ENCODE measurements at regions of chr21 and their contacts with region 1.

Region 1: GRCh38 chr21:44006017-44006619 is 6.0 kb upstream of the TRAPPC10 start:
- DNase-seq: no peak
- H3K4me3 ChIP-seq: no peak overlapping the region
- H3K27ac ChIP-seq: peak overlapping the region; percentile 40 to 79
- H3K4me1 ChIP-seq: no peaks in the 10 kb centered on the region
- H3K27me3 ChIP-seq: no peaks in the 10 kb centered on the region
- CTCF ChIP-seq: no peak
- POLR2A ChIP-seq: no peak

Region 2: DNA sequence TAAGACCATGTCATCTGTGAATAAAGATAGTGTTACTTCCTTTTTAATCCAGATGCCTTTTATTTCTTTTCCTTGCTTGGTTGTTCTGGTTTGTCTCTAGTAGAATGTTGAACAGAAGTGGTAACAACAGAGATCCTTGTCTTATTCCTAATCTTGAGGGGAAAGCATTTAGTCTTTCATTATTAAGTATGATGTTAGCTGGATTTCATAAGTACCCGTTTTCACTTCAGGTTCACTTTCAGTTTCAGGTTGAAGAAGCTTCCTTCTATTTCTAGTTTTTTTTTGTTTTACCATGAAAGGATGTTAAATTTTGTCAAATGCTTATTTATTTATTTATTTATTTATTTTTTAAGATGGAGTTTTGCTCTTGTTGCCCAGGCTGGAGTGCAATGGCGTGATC is 163.4 kb before region 1 on chr21:
- intact Hi-C with region 1: no loop called
- DNase-seq: no peak
- H3K4me3 ChIP-seq: no peak overlapping the region
- H3K27ac ChIP-seq: no peak overlapping the region
- H3K4me1 ChIP-seq: no peaks in the 10 kb centered on the region
- H3K27me3 ChIP-seq: no peaks in the 10 kb centered on the region
- CTCF ChIP-seq: no peak
- POLR2A ChIP-seq: no peak

Region 3: DNA sequence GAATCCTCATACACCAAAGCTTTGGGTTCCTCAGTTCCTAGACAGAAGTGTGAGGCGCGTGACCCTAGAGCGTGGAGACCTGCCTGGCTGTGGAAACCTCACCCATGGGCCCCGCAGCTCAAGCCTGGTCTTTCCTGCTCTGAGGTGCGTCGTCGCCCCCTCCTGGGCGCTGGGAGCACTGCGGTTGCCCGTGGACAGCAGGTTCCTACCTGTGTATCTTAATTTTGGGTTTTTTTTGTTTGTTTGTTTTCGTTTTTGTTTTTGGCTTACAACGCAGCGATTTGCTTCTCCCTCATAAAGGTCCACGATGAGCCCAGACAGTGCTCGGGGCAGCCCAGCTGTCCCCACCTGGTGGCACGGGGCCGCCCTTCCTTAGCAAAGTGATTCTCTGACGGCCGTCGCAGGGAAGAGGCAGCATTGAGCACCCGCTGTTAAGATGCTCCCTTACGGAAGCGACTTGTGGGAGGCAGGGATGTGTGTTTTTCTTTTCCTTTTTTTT is 30.6 kb before region 1 on chr21:
- intact Hi-C with region 1: no loop called
- DNase-seq: peak; percentile 66 to 83
- H3K4me3 ChIP-seq: no peak overlapping the region
- H3K27ac ChIP-seq: no peak overlapping the region
- H3K4me1 ChIP-seq: no peaks in the 10 kb centered on the region
- H3K27me3 ChIP-seq: no peaks in the 10 kb centered on the region
- CTCF ChIP-seq: peak; percentile 73 to 93 (median 90)
- POLR2A ChIP-seq: no peak

Region 4: GRCh38 chr21:44686000-44686781 is 680.1 kb after region 1 on chr21:
- intact Hi-C with region 1: no loop called
- DNase-seq: no peak
- H3K4me3 ChIP-seq: no peak overlapping the region
- H3K27ac ChIP-seq: no peak overlapping the region
- H3K4me1 ChIP-seq: no peaks in the 10 kb centered on the region
- H3K27me3 ChIP-seq: peaks cover 0 to 31% of the 10 kb centered on the region in 2 donors
- CTCF ChIP-seq: no peak
- POLR2A ChIP-seq: no peak

Region 5: GRCh38 chr21:45330075-45330781 is 1324.1 kb after region 1 on chr21:
- intact Hi-C with region 1: loop called (anchors 5 kb)
- DNase-seq: no peak
- H3K4me3 ChIP-seq: no peak overlapping the region
- H3K27ac ChIP-seq: peak overlapping the region; percentile 21 to 77
- H3K4me1 ChIP-seq: no peaks in the 10 kb centered on the region
- H3K27me3 ChIP-seq: no peaks in the 10 kb centered on the region
- CTCF ChIP-seq: no peak
- POLR2A ChIP-seq: no peak